PC-9 (cell line): ENCODE measurements at regions of chr7 and their contacts with region 1.

Region 1: DNA sequence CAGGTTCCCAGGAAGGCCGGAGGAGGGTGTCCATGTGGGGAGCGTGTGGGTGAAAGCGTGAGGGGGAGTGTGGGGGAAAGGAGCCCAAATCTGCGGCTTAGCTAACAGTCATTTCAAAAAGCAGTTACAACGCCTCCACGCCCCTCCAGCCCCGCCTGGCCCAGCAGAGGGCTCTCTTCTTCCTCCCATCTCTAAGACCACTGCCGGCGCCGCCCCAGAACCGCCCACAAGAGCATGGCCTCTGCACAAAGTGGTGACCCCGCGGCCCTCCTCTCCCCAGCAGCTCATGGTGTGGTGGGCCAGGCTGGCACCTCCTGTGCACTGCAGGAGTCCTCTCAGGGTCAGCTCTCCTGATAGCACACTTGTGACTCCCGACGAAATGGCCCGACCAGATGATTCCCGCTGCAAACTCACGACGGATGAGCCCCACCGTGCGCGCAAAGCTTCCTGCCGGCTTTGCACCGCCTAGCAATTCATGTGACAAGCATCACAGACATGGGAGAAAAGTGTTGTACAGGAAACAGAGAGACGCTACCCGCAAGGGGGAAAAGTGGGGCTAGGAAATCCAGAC is 12.4 kb upstream of the HUS1 start:
- DNase-seq: peak; percentile 66 to 87
- H3K4me3 ChIP-seq: peak overlapping the region; percentile 61
- H3K27ac ChIP-seq: peak overlapping the region; percentile 43
- H3K4me1 ChIP-seq: peaks cover 9% of the 10 kb centered on the region
- H3K27me3 ChIP-seq: no peaks in the 10 kb centered on the region
- CTCF ChIP-seq: peak; percentile 81

Region 2: GRCh38 chr7:47635091-47636080 is 356.4 kb before region 1 on chr7:
- CTCF ChIA-PET with region 1: no interaction called
- POLR2A ChIA-PET with region 1: interaction called, 24 read pairs
- intact Hi-C with region 1: no loop called
- DNase-seq: peak; percentile 80 to 82
- H3K4me3 ChIP-seq: peak overlapping the region; percentile 48
- H3K27ac ChIP-seq: peak overlapping the region; percentile 40
- H3K4me1 ChIP-seq: peaks cover 33% of the 10 kb centered on the region
- H3K27me3 ChIP-seq: no peaks in the 10 kb centered on the region
- CTCF ChIP-seq: no peak

Region 3: DNA sequence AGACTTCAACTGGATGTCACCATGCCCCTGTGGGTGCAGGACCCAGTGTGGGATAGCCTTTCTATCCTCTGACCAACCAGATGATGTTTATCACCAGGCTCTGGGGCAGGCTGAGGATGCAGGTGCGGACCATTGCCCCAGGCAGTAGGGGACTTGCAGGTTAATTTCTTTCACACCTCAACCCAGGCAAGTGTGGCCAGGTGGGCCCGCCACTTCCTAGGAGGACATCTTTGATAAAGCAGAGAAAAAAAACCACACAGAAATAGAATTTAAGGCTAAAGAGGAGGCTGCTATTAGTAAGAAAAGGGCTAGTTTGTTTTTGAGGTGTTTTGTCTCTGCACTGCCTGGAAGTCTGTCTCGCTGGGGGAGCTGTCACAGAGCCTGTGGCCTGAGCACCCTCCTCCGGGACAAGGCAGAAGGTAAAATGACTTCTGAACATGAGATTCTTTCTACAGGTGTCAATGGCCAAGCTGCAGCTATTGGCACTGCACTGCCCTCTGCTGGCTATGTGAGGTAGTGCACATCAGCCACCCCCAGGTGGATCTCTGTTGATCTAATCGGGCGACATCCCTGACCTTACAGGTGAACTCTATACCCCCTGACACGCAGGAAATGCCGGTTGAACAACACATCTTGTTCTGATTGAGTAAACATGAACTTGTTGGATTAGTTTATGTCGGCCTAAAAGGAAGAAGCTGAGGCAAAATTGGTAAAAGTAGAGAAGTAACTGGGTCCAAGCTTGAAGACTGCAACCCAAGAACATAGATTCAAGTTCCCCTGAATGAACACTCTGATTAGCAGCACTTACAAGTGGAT is 118.2 kb after region 1 on chr7:
- CTCF ChIA-PET with region 1: interaction called, 17 read pairs
- POLR2A ChIA-PET with region 1: no interaction called
- intact Hi-C with region 1: loop called (anchors 1 kb)
- DNase-seq: peak; percentile 95 to 96
- H3K4me3 ChIP-seq: peak overlapping the region; percentile 6; the same call in 1 of the 2 replicates
- H3K27ac ChIP-seq: peak overlapping the region; percentile 9
- H3K4me1 ChIP-seq: peaks cover 40% of the 10 kb centered on the region
- H3K27me3 ChIP-seq: no peaks in the 10 kb centered on the region
- CTCF ChIP-seq: peak; percentile 100

Region 4: GRCh38 chr7:48154792-48155413 is 163.1 kb after region 1 on chr7:
- CTCF ChIA-PET with region 1: interaction called, 9 read pairs
- POLR2A ChIA-PET with region 1: no interaction called
- intact Hi-C with region 1: loop called (anchors 1 kb)
- DNase-seq: peak; percentile 63 to 66
- H3K4me3 ChIP-seq: no peak overlapping the region
- H3K27ac ChIP-seq: no peak overlapping the region
- H3K4me1 ChIP-seq: peaks cover 7% of the 10 kb centered on the region; the same call in 1 of the 2 replicates
- H3K27me3 ChIP-seq: peaks cover 32% of the 10 kb centered on the region
- CTCF ChIP-seq: peak; percentile 93